OCI-LY7 (cell line): ENCODE measurements at regions of chrX and their contacts with region 1.

Region 1: DNA sequence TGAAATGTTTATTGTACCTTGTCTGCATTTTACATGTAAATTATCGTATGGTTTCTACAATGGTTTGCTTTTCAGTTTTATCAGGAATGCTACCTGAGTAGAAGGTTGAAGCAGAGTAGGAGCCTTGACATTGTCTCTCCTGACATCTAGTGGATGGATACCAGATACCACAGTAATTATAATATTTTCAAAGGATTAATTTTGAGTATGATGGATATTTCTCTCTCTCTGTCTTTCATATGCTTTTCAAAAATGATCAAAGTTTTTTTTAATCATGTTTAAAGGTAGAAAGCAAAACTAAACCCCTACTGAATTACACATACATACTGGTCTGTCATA is 109.4 kb upstream of the KLHL13 start:
- DNase-seq: peak; percentile 27
- H3K4me3 ChIP-seq: no peak overlapping the region
- H3K27ac ChIP-seq: no peak overlapping the region
- H3K4me1 ChIP-seq: no peaks in the 10 kb centered on the region
- CTCF ChIP-seq: peak; percentile 74

Region 2: DNA sequence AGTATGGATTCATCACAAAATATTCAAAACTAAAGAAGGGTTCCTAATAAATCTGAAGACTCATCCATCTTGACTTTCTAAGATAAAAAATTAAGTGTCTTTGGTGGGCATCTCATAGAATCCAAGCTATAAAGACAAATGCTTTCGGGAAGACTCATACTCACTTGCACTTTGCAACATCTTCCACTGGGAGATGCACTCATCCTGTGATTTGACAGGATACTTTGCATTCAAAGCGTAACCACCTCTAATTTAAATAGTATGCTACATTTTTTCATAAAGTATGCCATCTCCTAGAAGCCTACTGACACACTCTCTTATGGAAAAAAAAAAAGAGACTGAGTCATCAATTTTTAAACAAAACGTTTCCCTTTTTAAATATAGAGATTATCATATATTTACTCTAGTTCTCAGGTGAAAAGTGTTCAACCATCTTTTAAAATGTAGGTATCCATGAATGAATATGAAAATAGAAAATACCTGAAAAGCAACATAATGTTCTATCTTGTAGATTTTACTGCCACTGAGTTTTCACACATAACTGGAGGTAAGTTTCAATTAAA is 229.1 kb before region 1 on chrX:
- CTCF ChIA-PET with region 1: no interaction called
- POLR2A ChIA-PET with region 1: interaction called, 5 read pairs
- intact Hi-C with region 1: loop called (anchors 10 kb)
- DNase-seq: no peak
- H3K4me3 ChIP-seq: no peak overlapping the region
- H3K27ac ChIP-seq: no peak overlapping the region
- H3K4me1 ChIP-seq: no peaks in the 10 kb centered on the region
- CTCF ChIP-seq: 0 out of 2 replicates have a peak, but pooled peaks have one; percentile 18

Region 3: GRCh38 chrX:118325453-118325852 is 99.4 kb after region 1 on chrX:
- CTCF ChIA-PET with region 1: no interaction called
- POLR2A ChIA-PET with region 1: no interaction called
- intact Hi-C with region 1: no loop called
- DNase-seq: peak; percentile 22
- H3K4me3 ChIP-seq: no peak overlapping the region
- H3K27ac ChIP-seq: no peak overlapping the region
- H3K4me1 ChIP-seq: no peaks in the 10 kb centered on the region
- CTCF ChIP-seq: peak; percentile 64

Region 4: GRCh38 chrX:118761939-118762707 is 536.1 kb after region 1 on chrX:
- CTCF ChIA-PET with region 1: no interaction called
- POLR2A ChIA-PET with region 1: no interaction called
- intact Hi-C with region 1: no loop called
- DNase-seq: no peak
- H3K4me3 ChIP-seq: no peak overlapping the region
- H3K27ac ChIP-seq: no peak overlapping the region
- H3K4me1 ChIP-seq: no peaks in the 10 kb centered on the region
- CTCF ChIP-seq: peak; percentile 32; the same call in 1 of the 2 replicates